B cell (primary cell): ENCODE measurements at regions of chr17 and their contacts with region 1.

Region 1: GRCh38 chr17:31558748-31559644 is 167.5 kb downstream of the RAB11FIP4 start:
- DNase-seq: peak; percentile 78
- ATAC-seq: peak; percentile 94
- H3K4me3 ChIP-seq: peak overlapping the region in 4 of 5 experiments; percentile 39 to 82 (median 60)
- H3K4me3 Mint-ChIP-seq: peak overlapping the region; percentile 72
- H3K27ac ChIP-seq: no peak overlapping the region
- H3K27ac Mint-ChIP-seq: peak overlapping the region; percentile 20
- H3K4me1 ChIP-seq: peaks cover 15 to 27% of the 10 kb centered on the region in 2 donors
- H3K4me1 Mint-ChIP-seq: peaks cover 27% of the 10 kb centered on the region
- H3K27me3 ChIP-seq: peaks cover 0 to 7% (median 2%) of the 10 kb centered on the region in 4 experiments
- H3K27me3 Mint-ChIP-seq: no peaks in the 10 kb centered on the region
- CTCF ChIP-seq: peak; percentile 61

Region 2: DNA sequence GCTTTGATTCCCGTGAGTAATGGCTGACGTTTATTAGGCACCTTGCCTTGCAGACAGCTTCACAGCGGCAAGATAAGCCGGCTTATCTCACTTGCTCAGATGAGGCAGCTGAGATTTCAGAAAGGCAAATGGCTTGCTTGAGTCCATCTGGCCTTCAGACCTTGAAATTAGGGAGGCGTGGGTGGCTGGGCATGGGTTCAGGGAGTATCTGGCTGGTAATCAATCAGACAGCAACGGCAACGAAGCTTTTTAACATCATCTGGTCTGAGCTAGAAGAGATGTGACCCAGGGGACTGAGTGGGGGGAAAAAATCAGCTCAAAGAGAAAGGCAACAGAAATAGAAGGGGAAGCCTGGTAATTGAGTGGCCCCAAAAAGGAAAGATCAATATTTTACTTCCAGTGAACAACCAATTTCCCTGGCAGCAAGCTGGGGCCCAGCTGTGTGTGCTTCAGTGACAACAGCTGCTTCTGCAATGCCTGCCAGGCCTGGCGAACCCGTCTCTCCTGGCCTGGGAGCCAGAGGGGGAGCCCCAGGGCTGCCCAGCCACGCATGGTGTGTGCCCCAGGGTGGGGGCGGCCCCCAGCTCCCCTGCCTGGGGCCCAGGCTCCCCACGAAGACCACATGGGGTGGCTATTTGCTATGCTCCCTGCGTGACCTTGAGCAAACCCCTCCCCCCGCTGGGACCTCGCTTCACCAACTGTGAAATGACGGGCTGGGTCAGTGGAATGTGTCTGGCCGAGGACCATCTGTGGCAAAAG is 133.5 kb before region 1 on chr17:
- CTCF ChIA-PET with region 1: no interaction called
- POLR2A ChIA-PET with region 1: interaction called, 11 read pairs
- intact Hi-C with region 1: no loop called
- DNase-seq: no peak
- ATAC-seq: no peak
- H3K4me3 ChIP-seq: no peak overlapping the region
- H3K4me3 Mint-ChIP-seq: no peak overlapping the region
- H3K27ac ChIP-seq: no peak overlapping the region
- H3K27ac Mint-ChIP-seq: no peak overlapping the region
- H3K4me1 ChIP-seq: no peaks in the 10 kb centered on the region
- H3K4me1 Mint-ChIP-seq: no peaks in the 10 kb centered on the region
- H3K27me3 ChIP-seq: peaks cover 0 to 13% (median 0%) of the 10 kb centered on the region in 4 experiments
- H3K27me3 Mint-ChIP-seq: peaks cover 32% of the 10 kb centered on the region
- CTCF ChIP-seq: no peak

Region 3: DNA sequence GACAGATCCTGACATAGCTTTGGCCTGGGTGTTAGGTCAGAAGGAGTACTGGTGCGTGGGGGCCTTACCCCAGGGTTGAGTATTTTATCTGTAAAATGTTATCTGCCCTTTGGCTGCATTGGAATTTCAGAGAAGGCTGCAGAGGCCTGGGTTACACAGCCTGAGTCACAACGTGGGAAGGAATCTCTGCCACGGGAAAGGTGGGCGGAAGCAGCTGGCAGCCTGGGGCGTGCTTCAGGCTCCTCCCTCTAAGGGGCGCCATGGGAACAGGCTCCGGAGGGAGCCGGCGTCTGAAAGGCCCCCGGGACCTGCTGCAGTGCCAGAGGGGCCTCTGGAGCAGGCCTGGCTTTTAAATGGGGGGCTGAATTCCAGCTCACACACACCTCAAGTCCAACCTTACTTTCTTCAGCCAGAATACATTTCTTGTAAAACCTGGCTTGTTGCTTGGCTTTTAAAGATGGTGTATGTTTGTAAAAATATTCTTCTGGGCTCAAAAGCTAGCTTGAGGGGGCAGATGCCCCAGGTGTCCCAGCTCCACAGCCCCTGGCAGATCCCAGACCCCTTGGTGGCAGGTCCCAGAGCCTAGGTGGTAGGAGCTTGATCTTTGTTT is 25.3 kb before region 1 on chr17:
- CTCF ChIA-PET with region 1: interaction called, 17 read pairs
- POLR2A ChIA-PET with region 1: no interaction called
- intact Hi-C with region 1: no loop called
- DNase-seq: no peak
- ATAC-seq: no peak
- H3K4me3 ChIP-seq: no peak overlapping the region
- H3K4me3 Mint-ChIP-seq: no peak overlapping the region
- H3K27ac ChIP-seq: no peak overlapping the region
- H3K27ac Mint-ChIP-seq: no peak overlapping the region
- H3K4me1 ChIP-seq: peaks cover 41 to 53% of the 10 kb centered on the region in 2 donors
- H3K4me1 Mint-ChIP-seq: peaks cover 45% of the 10 kb centered on the region
- H3K27me3 ChIP-seq: no peaks in the 10 kb centered on the region
- H3K27me3 Mint-ChIP-seq: no peaks in the 10 kb centered on the region
- CTCF ChIP-seq: no peak

Region 4: GRCh38 chr17:31596382-31597323 is 37.7 kb after region 1 on chr17:
- CTCF ChIA-PET with region 1: no interaction called
- POLR2A ChIA-PET with region 1: no interaction called
- intact Hi-C with region 1: loop called (anchors 5 kb)
- DNase-seq: peak; percentile 73
- ATAC-seq: peak; percentile 99
- H3K4me3 ChIP-seq: no peak overlapping the region
- H3K4me3 Mint-ChIP-seq: peak overlapping the region; percentile 32
- H3K27ac ChIP-seq: peak overlapping the region; percentile 24 to 52
- H3K27ac Mint-ChIP-seq: peak overlapping the region; percentile 81
- H3K4me1 ChIP-seq: peaks cover 19 to 24% of the 10 kb centered on the region in 2 donors
- H3K4me1 Mint-ChIP-seq: peaks cover 34% of the 10 kb centered on the region
- H3K27me3 ChIP-seq: no peaks in the 10 kb centered on the region
- H3K27me3 Mint-ChIP-seq: no peaks in the 10 kb centered on the region
- CTCF ChIP-seq: no peak

Region 5: DNA sequence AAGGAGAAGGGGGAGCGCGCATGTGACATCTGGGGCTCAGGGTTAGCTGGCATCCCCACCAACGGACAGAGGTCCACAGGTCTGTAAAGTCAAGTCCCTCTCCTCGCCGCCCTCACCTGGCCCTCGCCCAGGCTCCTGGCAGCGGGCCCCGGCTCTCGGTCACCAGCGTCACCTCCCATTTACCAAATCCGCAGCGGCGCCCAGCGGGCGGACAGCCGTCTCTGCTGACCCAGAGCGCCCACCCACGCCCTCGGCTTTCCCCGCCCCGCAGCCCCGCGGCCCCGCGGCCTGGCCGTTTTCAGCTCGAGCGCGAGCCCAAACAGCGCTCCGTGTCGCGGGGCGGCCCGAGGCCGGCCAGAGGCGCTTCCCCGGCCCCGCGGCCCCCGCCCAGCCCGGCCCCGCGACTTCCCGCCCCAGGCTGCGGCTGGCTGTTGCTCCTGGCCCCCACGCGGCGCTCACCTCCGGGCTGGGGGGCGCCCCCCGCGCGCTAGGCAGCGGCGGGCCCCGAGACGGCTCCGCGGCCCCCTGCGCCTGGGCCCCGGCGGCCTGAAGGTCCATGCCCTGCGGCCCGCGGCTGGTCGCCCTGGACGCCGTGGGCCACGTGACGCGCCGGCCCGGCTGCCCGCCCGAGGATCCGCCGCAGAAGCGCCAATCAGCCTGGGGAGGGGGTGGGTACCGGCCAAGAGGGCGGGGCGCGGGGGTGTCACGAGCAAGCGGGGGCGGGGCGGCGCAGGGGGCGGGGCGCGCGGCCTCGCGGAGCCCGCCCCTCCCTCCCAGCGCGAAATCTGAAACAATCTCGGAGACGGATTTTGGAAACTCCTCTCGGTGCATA is 299.9 kb after region 1 on chr17 and contains the start of gene COPRS:
- CTCF ChIA-PET with region 1: interaction called, 3 read pairs
- POLR2A ChIA-PET with region 1: no interaction called
- intact Hi-C with region 1: loop called (anchors 1 kb)
- DNase-seq: peak; percentile 88
- ATAC-seq: peak; percentile 94
- H3K4me3 ChIP-seq: peak within 1 kb of the TSS; percentile 46 to 71 (median 54)
- H3K4me3 Mint-ChIP-seq: peak within 1 kb of the TSS; percentile 93
- H3K27ac ChIP-seq: peak within 1 kb of the TSS in 1 of 2 donors; percentile 48
- H3K27ac Mint-ChIP-seq: peak within 1 kb of the TSS; percentile 89
- H3K4me1 ChIP-seq: peaks cover 11 to 16% of the 10 kb centered on the region in 2 donors
- H3K4me1 Mint-ChIP-seq: peaks cover 24% of the 10 kb centered on the region
- H3K27me3 ChIP-seq: no peaks in the 10 kb centered on the region
- H3K27me3 Mint-ChIP-seq: no peaks in the 10 kb centered on the region
- CTCF ChIP-seq: no peak
- total RNA-seq, gene COPRS: 17.1 and 17.6 TPM in 2 replicates

Region 6: GRCh38 chr17:31900877-31901276 is 341.9 kb after region 1 on chr17:
- CTCF ChIA-PET with region 1: interaction called, 4 read pairs
- POLR2A ChIA-PET with region 1: no interaction called
- intact Hi-C with region 1: loop called (anchors 1 kb)
- DNase-seq: no peak
- ATAC-seq: no peak
- H3K4me3 ChIP-seq: peak overlapping the region; percentile 76 to 95 (median 90)
- H3K4me3 Mint-ChIP-seq: no peak overlapping the region
- H3K27ac ChIP-seq: peak overlapping the region; percentile 47 to 78
- H3K27ac Mint-ChIP-seq: no peak overlapping the region
- H3K4me1 ChIP-seq: peaks cover 6 to 10% of the 10 kb centered on the region in 2 donors
- H3K4me1 Mint-ChIP-seq: peaks cover 5% of the 10 kb centered on the region
- H3K27me3 ChIP-seq: no peaks in the 10 kb centered on the region
- H3K27me3 Mint-ChIP-seq: no peaks in the 10 kb centered on the region
- CTCF ChIP-seq: no peak